RWPE1 (cell line): ENCODE measurements at regions of chr3 and their contacts with region 1.

Region 1: GRCh38 chr3:151838583-151839312 is 24.8 kb downstream of the AADAC start:
- DNase-seq: peak; percentile 56
- H3K27ac ChIP-seq: no peak overlapping the region
- CTCF ChIP-seq: peak; percentile 82

Region 2: DNA sequence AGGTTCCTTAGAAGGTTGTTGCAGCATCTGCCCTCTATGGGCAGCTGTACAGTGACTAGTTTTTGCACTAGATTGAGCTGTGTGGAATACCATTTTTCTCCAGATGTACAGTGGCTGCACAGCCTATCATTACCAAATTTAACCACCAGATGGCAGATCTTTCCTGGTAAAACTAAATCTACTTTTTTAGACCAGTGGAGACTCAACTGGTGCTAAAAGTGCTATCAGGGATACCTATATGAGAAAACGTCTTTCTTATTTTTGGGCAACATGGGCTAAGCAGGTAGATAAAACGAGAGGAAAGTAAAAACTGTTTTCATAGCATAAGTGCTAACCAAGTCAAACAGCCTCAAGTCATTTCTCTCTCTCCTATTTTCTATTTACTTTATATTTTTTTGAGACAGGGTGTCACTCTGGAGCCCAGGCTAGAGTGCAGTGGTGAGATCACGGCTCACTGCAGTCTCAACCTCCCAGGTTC is 399.1 kb before region 1 on chr3:
- CTCF ChIA-PET with region 1: interaction called, 10 read pairs
- POLR2A ChIA-PET with region 1: no interaction called
- DNase-seq: peak; percentile 46
- H3K27ac ChIP-seq: no peak overlapping the region
- CTCF ChIP-seq: peak; percentile 76

Region 3: GRCh38 chr3:151468284-151468917 is 370.3 kb before region 1 on chr3:
- CTCF ChIA-PET with region 1: interaction called, 10 read pairs
- POLR2A ChIA-PET with region 1: no interaction called
- DNase-seq: peak; percentile 57
- H3K27ac ChIP-seq: no peak overlapping the region
- CTCF ChIP-seq: peak; percentile 88